ENCODE measurements at regions of chr20 and their contacts with region 1.

Region 1: GRCh38 chr20:50929299-50930138 is 1.7 kb downstream of the ADNP start:
- DNase-seq: peak; percentile 91
- H3K4me3 Mint-ChIP-seq: peak overlapping the region; percentile 95
- H3K27ac Mint-ChIP-seq: peak overlapping the region; percentile 95
- H3K4me1 Mint-ChIP-seq: peaks cover 66% of the 10 kb centered on the region
- H3K27me3 Mint-ChIP-seq: no peaks in the 10 kb centered on the region

Region 2: DNA sequence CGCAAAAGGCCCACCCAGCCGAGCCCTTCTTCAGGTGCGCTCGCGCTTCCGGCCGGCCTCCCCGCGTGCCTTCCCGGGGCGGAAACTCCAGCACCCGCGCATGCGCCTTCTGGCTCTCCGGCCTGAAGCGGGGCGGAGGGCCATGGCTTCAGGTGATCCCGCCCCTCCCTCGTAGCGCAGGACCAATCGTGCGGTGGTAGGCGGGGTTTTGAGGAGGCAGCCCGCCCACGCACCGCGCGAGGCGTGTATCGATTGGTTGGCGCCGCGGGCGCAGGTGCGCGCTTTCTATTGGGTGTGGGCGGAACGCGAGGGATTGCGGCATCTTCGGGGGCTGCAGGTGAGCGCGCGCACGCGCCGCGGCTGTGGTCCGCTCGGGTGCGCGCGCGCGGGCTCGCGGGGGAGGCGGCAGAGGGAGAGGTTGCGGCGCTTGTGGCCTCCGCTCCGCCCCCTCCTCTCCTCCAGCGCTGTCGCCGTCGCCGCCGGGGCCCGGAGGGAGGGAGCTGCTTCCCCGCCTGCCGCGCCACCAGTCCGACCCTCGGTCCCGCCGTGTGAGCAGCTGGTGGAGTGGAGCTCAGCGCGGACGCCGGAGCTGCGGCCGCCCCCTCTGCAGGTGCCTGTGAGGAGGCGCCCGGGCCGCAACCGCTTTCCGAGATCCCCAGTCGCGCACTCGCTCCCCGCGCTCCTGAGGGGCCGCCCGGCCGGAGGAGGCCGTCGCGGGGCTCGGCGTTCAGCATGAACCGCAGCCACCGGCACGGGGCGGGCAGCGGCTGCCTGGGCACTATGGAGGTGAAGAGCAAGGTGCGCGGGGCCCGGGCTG is 198.3 kb before region 1 on chr20 and contains the start of gene PARD6B:
- intact Hi-C with region 1: loop called (anchors 1 kb)
- DNase-seq: peak; percentile 99
- H3K4me3 Mint-ChIP-seq: peak within 1 kb of the TSS; percentile 86
- H3K27ac Mint-ChIP-seq: peak within 1 kb of the TSS; percentile 92
- H3K4me1 Mint-ChIP-seq: peaks cover 38% of the 10 kb centered on the region
- H3K27me3 Mint-ChIP-seq: peaks cover 1% of the 10 kb centered on the region
- total RNA-seq, gene PARD6B: 6.3 and 7.1 TPM in 2 replicates

Region 3: GRCh38 chr20:50815162-50815989 is 114.1 kb before region 1 on chr20:
- intact Hi-C with region 1: loop called (anchors 1 kb)
- DNase-seq: no peak
- H3K4me3 Mint-ChIP-seq: peak overlapping the region; percentile 61
- H3K27ac Mint-ChIP-seq: peak overlapping the region; percentile 77
- H3K4me1 Mint-ChIP-seq: peaks cover 38% of the 10 kb centered on the region
- H3K27me3 Mint-ChIP-seq: peaks cover 4% of the 10 kb centered on the region

Region 4: GRCh38 chr20:50913690-50914375 is 15.7 kb before region 1 on chr20:
- intact Hi-C with region 1: loop called (anchors 1 kb)
- DNase-seq: peak; percentile 6
- H3K4me3 Mint-ChIP-seq: no peak overlapping the region
- H3K27ac Mint-ChIP-seq: peak overlapping the region; percentile 52
- H3K4me1 Mint-ChIP-seq: peaks cover 73% of the 10 kb centered on the region
- H3K27me3 Mint-ChIP-seq: no peaks in the 10 kb centered on the region

Region 5: GRCh38 chr20:50958615-50959542 is 29.4 kb after region 1 on chr20 and contains the start of gene MOCS3:
- intact Hi-C with region 1: loop called (anchors 1 kb)
- DNase-seq: peak; percentile 80
- H3K4me3 Mint-ChIP-seq: peak within 1 kb of the TSS; percentile 99
- H3K27ac Mint-ChIP-seq: peak within 1 kb of the TSS; percentile 92
- H3K4me1 Mint-ChIP-seq: peaks cover 50% of the 10 kb centered on the region
- H3K27me3 Mint-ChIP-seq: no peaks in the 10 kb centered on the region
- total RNA-seq, gene MOCS3: 6.2 and 6.7 TPM in 2 replicates

Region 6: GRCh38 chr20:50980851-50981713 is 51.6 kb after region 1 on chr20:
- intact Hi-C with region 1: loop called (anchors 1 kb)
- DNase-seq: peak; percentile 30
- H3K4me3 Mint-ChIP-seq: no peak overlapping the region
- H3K27ac Mint-ChIP-seq: peak overlapping the region; percentile 93
- H3K4me1 Mint-ChIP-seq: peaks cover 16% of the 10 kb centered on the region
- H3K27me3 Mint-ChIP-seq: peaks cover 12% of the 10 kb centered on the region